Right ventricle myocardium inferior (tissue), 1 donor: ENCODE measurements at regions of chr15 and their contacts with region 1.

Region 1: GRCh38 chr15:66851226-66852071 is 149.4 kb downstream of the SMAD6 start:
- DNase-seq: peak; percentile 93
- ATAC-seq: peak; percentile 89

Region 2: GRCh38 chr15:66578286-66578875 is 273.1 kb before region 1 on chr15:
- intact Hi-C with region 1: no loop called
- DNase-seq: no peak
- ATAC-seq: no peak

Region 3: GRCh38 chr15:66603301-66604179 is 247.9 kb before region 1 on chr15:
- intact Hi-C with region 1: loop called (anchors 1 kb)
- DNase-seq: peak; percentile 89
- ATAC-seq: peak; percentile 71

Region 4: GRCh38 chr15:66619151-66619903 is 232.1 kb before region 1 on chr15:
- intact Hi-C with region 1: loop called (anchors 2 kb)
- DNase-seq: peak; percentile 87
- ATAC-seq: peak; percentile 72

Region 5: GRCh38 chr15:66763186-66764066 is 88.0 kb before region 1 on chr15:
- intact Hi-C with region 1: no loop called
- DNase-seq: peak; percentile 94
- ATAC-seq: peak; percentile 90

Region 6: DNA sequence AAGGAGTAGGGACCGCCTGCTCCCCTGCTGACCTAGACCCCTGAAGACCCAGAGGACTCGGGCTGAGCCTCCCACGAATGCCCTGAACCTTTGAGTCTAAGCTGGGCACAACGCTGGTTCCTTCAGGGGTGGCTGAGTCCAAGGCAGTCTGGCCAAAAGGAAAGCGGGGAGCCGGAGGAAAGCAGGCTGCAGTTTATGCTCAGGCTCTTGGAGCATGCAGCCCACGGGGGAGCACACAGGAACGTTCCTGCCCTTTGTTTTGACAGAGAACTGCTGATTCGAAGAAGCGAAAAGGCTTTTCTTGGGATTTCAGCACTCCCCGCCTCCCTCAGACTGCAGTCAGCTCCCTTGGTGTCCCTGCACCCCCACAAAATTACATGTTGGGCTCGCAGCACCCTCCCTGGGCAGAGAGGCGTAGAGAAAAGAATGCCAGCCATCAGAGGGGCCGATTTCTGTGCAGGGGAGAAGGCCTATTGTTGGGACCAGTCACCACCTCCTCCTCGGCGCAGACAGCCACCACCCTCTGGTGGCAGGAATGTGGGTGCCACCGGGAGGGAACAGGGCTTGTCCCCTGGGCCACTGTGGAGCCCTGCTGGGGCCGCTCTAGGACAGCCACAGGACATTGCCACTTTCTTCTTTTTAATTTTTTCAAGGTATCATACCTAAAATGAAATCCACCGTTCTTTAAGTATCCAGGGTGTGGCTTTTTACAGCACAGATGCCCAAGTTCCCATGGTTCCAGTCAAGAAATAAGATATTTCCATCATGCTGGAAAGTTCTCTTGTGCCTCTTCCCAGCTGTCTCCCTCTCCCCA is 77.2 kb before region 1 on chr15:
- intact Hi-C with region 1: loop called (anchors 1 kb)
- DNase-seq: peak; percentile 89
- ATAC-seq: peak; percentile 94